ENCODE measurements at regions of chr9 and their contacts with region 1.

Region 1: DNA sequence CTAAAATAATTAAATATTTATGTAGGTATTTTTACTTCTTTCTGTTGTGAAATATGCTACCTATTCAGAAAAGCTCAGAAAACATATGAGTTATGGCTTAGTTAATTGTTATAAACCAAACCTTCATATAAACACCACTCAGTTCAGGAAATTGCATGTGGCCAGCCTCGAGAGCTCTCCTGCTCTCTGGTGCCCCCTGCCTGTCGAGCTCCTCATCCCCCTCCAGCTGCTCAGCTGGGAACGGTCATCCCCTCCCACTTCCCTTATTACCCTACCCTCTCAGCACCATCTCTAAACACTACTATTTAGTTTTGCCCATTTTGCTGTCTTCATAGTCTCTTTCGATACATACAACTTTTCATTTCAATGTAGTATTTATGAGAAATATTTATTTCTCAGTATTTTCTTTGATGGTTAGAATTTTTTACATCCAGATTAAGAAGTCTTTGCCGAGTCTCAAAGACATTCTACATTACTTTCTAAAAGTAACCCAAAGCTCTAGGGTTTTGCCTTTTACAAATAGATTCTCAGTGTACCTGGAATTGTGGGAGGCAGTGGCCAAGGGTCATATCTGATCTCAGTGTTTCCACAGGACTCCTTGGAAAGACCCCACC is 51.2 kb upstream of the SEMA4D start:
- DNase-seq: peak; percentile 95
- H3K4me3 Mint-ChIP-seq: peak overlapping the region; percentile 28
- H3K27ac Mint-ChIP-seq: peak overlapping the region; percentile 62
- H3K4me1 Mint-ChIP-seq: peaks cover 19% of the 10 kb centered on the region
- H3K27me3 Mint-ChIP-seq: peaks cover 11% of the 10 kb centered on the region

Region 2: DNA sequence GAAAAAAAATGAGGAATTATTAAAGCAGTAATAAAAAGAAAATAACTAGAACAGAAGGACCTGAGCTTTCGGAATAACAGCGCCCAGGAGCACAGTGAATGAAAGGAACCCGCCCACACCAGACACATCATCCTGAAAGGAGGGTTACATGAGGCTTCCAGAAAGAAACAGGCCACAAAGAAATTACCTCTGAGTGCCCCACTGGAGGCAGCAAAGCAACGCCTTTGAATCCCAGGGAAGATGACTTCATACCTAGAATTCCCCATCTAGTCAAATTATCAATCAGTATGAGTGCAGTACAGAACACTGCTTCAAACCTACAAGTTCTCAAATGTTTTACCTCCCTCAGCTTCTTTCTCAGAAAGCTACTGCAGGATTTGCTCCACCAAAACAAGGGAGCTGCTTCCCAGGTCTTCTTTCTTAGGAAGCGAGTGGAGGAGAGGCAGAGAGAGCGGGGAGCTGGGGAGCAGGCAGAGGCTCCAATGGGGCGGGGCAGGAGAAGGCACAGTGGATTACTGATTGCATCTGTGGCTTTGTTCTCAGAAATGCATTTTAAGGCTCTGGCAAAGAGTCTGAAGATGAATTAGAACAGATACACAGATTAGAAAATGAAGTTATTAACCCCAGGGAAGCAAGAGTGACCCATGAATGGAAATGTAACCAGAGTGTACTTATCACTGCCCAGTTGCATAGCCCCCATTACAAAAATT is 138.3 kb before region 1 on chr9:
- intact Hi-C with region 1: loop called (anchors 1 kb)
- DNase-seq: peak; percentile 81
- H3K4me3 Mint-ChIP-seq: peak overlapping the region; percentile 76
- H3K27ac Mint-ChIP-seq: peak overlapping the region; percentile 96
- H3K4me1 Mint-ChIP-seq: peaks cover 87% of the 10 kb centered on the region
- H3K27me3 Mint-ChIP-seq: no peaks in the 10 kb centered on the region

Region 3: DNA sequence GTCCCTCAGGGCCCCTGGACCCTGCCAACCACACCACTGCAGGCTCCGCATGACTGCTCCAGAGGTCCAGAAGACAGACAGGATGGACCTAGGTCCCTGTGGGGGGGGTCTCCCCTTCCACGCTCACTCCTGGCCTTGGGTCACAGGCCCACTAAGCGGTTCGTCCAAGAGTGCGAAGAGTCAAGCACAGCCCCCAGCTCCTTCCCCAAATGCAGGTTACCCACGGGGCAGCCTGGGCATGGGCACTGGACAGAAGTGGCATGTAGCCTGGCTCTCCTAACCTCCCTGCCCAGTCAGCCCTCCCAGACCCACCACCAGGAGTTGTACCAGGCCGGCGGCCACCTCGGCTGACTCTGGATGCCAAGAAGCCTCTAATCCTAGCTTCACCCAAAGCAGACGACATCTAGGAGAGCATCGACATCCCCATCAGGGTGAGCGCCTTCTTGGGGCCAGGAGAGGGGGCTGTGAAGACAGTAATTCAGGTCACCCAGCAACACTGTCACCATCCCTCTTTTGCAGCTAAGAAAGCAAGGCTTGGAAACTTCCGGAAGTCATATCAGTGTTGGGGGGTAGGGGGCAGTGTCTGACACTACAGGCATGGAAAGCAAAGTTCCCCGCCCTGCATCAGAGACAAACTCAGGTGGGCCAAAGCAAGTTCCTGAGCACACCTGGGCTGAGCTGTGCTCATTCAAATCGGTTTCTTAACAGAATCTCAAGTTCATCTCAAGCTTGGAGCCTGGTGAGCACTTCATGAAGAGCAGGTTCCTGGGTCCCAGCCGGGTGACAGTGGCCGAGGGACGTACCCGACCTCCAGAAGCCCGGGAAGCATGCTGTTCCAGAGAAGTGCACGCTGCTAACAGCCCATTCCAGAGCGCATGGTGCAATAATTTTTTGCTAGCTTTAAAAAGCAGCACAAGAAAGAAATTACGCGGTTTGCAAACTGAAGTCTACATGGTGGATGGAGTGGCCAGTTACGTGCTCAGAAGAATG is 119.9 kb before region 1 on chr9:
- intact Hi-C with region 1: loop called (anchors 1 kb)
- DNase-seq: peak; percentile 84
- H3K4me3 Mint-ChIP-seq: peak overlapping the region; percentile 26
- H3K27ac Mint-ChIP-seq: peak overlapping the region; percentile 86
- H3K4me1 Mint-ChIP-seq: peaks cover 72% of the 10 kb centered on the region
- H3K27me3 Mint-ChIP-seq: no peaks in the 10 kb centered on the region

Measured in activated CD4-positive, alpha-beta T cell treated with anti-CD3 and anti-CD28 coated beads, Interleukin-2, amount 10 ng/mL, durations not matched to agents 24 days and 14 days (primary cell).